Breast epithelium (tissue), 4 donors: ENCODE measurements at regions of chr21 and their contacts with region 1.

Region 1: GRCh38 chr21:31409831-31410487 is 65.9 kb upstream of the TIAM1 start:
- DNase-seq: no peak
- H3K4me3 ChIP-seq: no peak overlapping the region
- H3K27ac ChIP-seq: peak overlapping the region in 1 of 2 donors; percentile 61
- H3K4me1 ChIP-seq: no peaks in the 10 kb centered on the region
- H3K27me3 ChIP-seq: no peaks in the 10 kb centered on the region
- CTCF ChIP-seq: no peak
- POLR2A ChIP-seq: no peak

Region 2: GRCh38 chr21:32055305-32055704 is 645.3 kb after region 1 on chr21:
- intact Hi-C with region 1: loop called (anchors 10 kb)
- DNase-seq: no peak
- H3K4me3 ChIP-seq: no peak overlapping the region
- H3K27ac ChIP-seq: no peak overlapping the region
- H3K4me1 ChIP-seq: no peaks in the 10 kb centered on the region
- H3K27me3 ChIP-seq: no peaks in the 10 kb centered on the region
- CTCF ChIP-seq: no peak
- POLR2A ChIP-seq: no peak

Region 3: GRCh38 chr21:32382108-32382644 is 972.2 kb after region 1 on chr21:
- intact Hi-C with region 1: no loop called
- DNase-seq: no peak
- H3K4me3 ChIP-seq: no peak overlapping the region
- H3K27ac ChIP-seq: no peak overlapping the region
- H3K4me1 ChIP-seq: no peaks in the 10 kb centered on the region
- H3K27me3 ChIP-seq: no peaks in the 10 kb centered on the region
- CTCF ChIP-seq: no peak
- POLR2A ChIP-seq: no peak